Heart left ventricle (tissue), 16 donors: ENCODE measurements at regions of chr1 and their contacts with region 1.

Region 1: GRCh38 chr1:84781946-84782771 is 91.9 kb upstream of the SSX2IP start:
- DNase-seq: peak; percentile 41 to 75 (median 62)
- ATAC-seq: peak; percentile 33 to 80 (median 70)
- H3K4me3 ChIP-seq: no peak overlapping the region
- H3K27ac ChIP-seq: no peak overlapping the region
- H3K4me1 ChIP-seq: no peaks in the 10 kb centered on the region
- H3K27me3 ChIP-seq: no peaks in the 10 kb centered on the region
- CTCF ChIP-seq: peak; percentile 39 to 68 (median 56)
- POLR2A ChIP-seq: no peak

Region 2: GRCh38 chr1:84892705-84893618 is 110.8 kb after region 1 on chr1 and contains the start of gene LPAR3:
- intact Hi-C with region 1: loop called in 1 of 10 experiments (anchors 5 kb)
- DNase-seq: peak; percentile 28 to 74 (median 69)
- ATAC-seq: peak; percentile 77 to 97 (median 86)
- H3K4me3 ChIP-seq: peak within 1 kb of the TSS; percentile 17 to 69 (median 52)
- H3K27ac ChIP-seq: peak within 1 kb of the TSS in 6 of 12 donors; percentile 5 to 69 (median 42)
- H3K4me1 ChIP-seq: peaks cover 0 to 17% (median 0%) of the 10 kb centered on the region in 12 donors
- H3K27me3 ChIP-seq: peaks cover 0 to 38% (median 7%) of the 10 kb centered on the region in 9 donors
- CTCF ChIP-seq: peak in 1 of 12 donors; percentile 6
- POLR2A ChIP-seq: no peak
- total RNA-seq, gene LPAR3: 5.9 to 25.0 (median 14.7) TPM

Region 3: DNA sequence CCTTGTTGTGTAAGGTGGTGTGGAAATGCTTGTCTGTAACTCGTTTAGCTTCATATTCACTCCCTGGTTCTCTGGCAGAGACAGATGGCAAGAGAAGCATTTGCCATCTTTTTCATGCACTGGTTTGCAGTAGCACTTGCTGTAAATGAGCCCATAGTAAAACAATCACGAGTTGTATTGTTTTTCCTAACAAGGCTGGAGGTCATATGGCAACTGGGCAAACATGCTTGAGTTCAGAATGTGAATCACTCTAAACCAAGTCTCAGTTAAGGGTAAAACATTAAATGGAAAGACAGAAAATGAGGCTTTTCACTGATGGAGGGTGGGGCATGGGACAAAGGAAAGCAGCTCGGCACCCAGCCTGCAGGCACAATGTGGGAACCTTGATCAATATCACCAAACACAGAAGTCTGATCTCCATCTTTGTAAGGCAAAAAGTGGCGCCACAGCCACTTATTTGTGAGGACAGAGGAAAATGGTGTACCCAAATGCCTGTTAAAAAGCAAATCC is 137.4 kb after region 1 on chr1:
- intact Hi-C with region 1: loop called in 1 of 10 experiments (anchors 5 kb)
- DNase-seq: no peak
- ATAC-seq: no peak
- H3K4me3 ChIP-seq: no peak overlapping the region
- H3K27ac ChIP-seq: no peak overlapping the region
- H3K4me1 ChIP-seq: no peaks in the 10 kb centered on the region
- H3K27me3 ChIP-seq: no peaks in the 10 kb centered on the region
- CTCF ChIP-seq: no peak
- POLR2A ChIP-seq: no peak

Region 4: GRCh38 chr1:84930329-84930728 is 148.2 kb after region 1 on chr1:
- intact Hi-C with region 1: loop called in 6 of 10 experiments (anchors 5 to 10 kb)
- DNase-seq: no peak
- ATAC-seq: no peak
- H3K4me3 ChIP-seq: no peak overlapping the region
- H3K27ac ChIP-seq: no peak overlapping the region
- H3K4me1 ChIP-seq: no peaks in the 10 kb centered on the region
- H3K27me3 ChIP-seq: peaks cover 0 to 6% (median 0%) of the 10 kb centered on the region in 9 donors
- CTCF ChIP-seq: no peak
- POLR2A ChIP-seq: no peak